Activated CD8-positive, alpha-beta T cell treated with anti-CD3 and anti-CD28 coated beads for 36 hours (primary cell): ENCODE measurements at regions of chr1 and their contacts with region 1.

Region 1: DNA sequence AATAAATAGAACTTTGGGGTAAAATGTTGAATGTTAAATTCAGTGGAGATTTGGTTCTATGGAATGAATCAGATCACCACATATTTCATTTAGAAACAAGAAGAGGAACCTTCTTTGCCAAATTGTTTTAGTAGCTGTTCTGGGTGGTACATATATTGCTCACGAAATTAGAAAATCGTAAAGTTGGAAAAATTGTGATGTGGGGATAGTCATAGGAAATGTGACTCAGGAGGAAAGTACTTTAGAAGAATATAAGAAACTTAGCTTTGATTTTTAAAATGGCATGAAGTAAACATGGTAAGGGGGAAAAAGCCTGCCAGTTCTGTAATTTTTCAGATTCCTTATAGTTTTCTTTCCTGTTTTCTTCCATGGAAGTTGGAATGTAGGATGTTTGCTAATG is 27.4 kb downstream of the RRP15 start:
- DNase-seq: no peak
- ATAC-seq: no peak
- H3K4me3 Mint-ChIP-seq: no peak overlapping the region
- H3K27ac Mint-ChIP-seq: peak overlapping the region; percentile 2
- H3K4me1 Mint-ChIP-seq: peaks cover 9% of the 10 kb centered on the region
- H3K27me3 Mint-ChIP-seq: no peaks in the 10 kb centered on the region
- CTCF ChIP-seq: no peak

Region 2: DNA sequence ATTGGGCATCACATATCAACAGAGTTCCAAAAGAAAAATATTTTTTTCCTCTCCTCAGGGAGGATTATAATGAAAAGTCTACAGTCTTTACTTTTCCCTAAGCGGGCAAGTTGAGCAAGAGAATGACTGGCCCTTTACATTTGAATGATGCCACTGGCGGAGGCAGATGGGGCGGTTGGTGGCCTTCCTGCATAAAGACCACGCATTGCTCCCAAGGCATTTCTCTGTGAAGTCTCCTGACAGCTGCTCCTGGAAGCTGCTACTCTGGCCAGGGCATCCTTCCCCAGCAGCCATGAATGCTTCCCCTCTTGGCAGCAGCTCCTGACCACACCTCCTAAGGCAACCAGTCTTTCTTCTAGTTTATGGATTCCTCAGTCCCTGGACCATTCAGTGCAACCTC is 188.5 kb before region 1 on chr1:
- CTCF ChIA-PET with region 1: no interaction called
- POLR2A ChIA-PET with region 1: no interaction called
- intact Hi-C with region 1: no loop called
- DNase-seq: no peak
- ATAC-seq: no peak
- H3K4me3 Mint-ChIP-seq: no peak overlapping the region
- H3K27ac Mint-ChIP-seq: no peak overlapping the region
- H3K4me1 Mint-ChIP-seq: no peaks in the 10 kb centered on the region
- H3K27me3 Mint-ChIP-seq: no peaks in the 10 kb centered on the region
- CTCF ChIP-seq: no peak

Region 3: GRCh38 chr1:218330043-218330623 is 17.6 kb after region 1 on chr1:
- CTCF ChIA-PET with region 1: interaction called, 10 read pairs
- POLR2A ChIA-PET with region 1: no interaction called
- intact Hi-C with region 1: no loop called
- DNase-seq: no peak
- ATAC-seq: peak; percentile 66
- H3K4me3 Mint-ChIP-seq: no peak overlapping the region
- H3K27ac Mint-ChIP-seq: no peak overlapping the region
- H3K4me1 Mint-ChIP-seq: peaks cover under 1% of the 10 kb centered on the region
- H3K27me3 Mint-ChIP-seq: no peaks in the 10 kb centered on the region
- CTCF ChIP-seq: peak; percentile 73